Upper lobe of right lung (tissue), 1 donor: ENCODE measurements at regions of chr1 and their contacts with region 1.

Region 1: DNA sequence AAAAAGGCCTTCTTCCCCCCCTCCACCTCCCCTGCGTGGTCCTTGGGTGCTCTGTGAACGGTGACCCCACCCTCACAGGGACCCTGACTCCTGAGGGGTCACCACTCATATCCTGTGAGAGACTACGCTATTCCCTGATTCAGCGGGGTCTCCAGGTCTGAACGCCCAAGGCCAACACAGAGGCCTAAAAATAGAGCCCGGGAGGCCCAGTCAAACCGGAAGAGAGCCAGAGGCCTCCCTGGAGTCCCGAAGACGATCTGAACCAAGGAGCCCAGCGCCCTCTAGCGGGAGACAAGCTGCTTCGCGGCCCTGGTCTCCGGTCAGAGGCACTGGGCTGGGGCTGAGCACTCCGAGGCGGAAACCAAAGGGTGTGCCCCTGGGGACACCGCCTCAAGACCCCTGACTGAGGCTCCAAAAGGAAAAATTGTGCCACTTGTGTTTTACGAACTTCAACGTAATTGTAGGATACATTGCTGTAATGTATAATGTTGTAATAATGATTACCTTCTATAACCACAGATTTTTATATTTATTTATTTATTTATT is 42.4 kb upstream of the PSEN2 start:
- DNase-seq: peak; percentile 96
- ATAC-seq: peak; percentile 99
- H3K4me3 ChIP-seq: no peak overlapping the region
- H3K27ac ChIP-seq: peak overlapping the region; percentile 72
- H3K4me1 ChIP-seq: peaks cover 12% of the 10 kb centered on the region
- H3K27me3 ChIP-seq: no peaks in the 10 kb centered on the region
- CTCF ChIP-seq: peak; percentile 97

Region 2: GRCh38 chr1:226236826-226237225 is 591.2 kb before region 1 on chr1:
- intact Hi-C with region 1: no loop called
- DNase-seq: no peak
- ATAC-seq: no peak
- H3K4me3 ChIP-seq: no peak overlapping the region
- H3K27ac ChIP-seq: no peak overlapping the region
- H3K4me1 ChIP-seq: no peaks in the 10 kb centered on the region
- H3K27me3 ChIP-seq: no peaks in the 10 kb centered on the region
- CTCF ChIP-seq: no peak

Region 3: DNA sequence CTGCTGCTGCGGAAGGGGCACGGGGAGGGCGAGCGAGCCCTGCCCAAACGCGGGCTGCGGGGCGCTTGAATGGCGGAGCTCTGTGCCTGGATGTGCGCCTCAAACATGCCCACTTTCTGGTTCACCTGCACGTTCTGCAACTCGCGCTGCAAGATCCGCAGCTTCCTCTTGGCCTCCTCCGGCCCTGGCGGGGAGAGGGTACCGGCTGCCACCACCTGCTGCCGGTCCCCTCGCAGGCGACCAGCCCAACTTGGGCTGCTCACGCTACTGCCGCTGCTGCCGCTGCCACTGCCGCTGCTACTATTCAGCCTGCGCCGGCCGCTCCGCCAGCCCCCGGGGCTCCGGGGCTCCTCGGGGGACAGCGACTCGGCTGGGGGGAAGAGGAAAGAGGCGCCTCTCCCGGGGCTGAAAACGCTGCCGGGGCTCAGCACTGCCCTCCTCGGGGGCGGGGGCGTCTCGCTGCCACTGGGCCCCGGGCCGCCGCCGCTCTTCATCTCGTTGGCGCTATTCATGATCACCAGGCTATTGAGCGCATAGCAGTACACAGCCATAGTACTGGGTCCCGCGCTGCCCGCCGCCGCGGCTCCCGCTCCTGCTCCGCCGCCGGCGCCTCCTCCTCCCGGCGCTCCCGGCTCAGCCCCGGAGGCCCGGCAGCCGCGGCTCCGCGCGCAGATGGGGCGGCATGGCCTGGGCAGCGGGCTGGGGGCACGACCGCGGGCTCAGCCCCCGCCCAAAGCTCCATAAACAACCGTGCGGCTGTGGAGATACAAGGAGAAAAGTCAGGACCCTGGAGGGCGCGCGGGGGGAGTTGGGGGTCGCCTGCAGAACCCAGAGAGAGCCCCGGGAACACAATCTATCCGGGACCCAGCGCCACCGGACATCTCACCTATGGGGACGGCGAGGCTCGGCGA is 90.9 kb before region 1 on chr1:
- intact Hi-C with region 1: loop called (anchors 10 kb)
- DNase-seq: peak; percentile 74
- ATAC-seq: peak; percentile 57
- H3K4me3 ChIP-seq: peak overlapping the region; percentile 96
- H3K27ac ChIP-seq: peak overlapping the region; percentile 86
- H3K4me1 ChIP-seq: peaks cover 43% of the 10 kb centered on the region
- H3K27me3 ChIP-seq: no peaks in the 10 kb centered on the region
- CTCF ChIP-seq: peak; percentile 19

Region 4: DNA sequence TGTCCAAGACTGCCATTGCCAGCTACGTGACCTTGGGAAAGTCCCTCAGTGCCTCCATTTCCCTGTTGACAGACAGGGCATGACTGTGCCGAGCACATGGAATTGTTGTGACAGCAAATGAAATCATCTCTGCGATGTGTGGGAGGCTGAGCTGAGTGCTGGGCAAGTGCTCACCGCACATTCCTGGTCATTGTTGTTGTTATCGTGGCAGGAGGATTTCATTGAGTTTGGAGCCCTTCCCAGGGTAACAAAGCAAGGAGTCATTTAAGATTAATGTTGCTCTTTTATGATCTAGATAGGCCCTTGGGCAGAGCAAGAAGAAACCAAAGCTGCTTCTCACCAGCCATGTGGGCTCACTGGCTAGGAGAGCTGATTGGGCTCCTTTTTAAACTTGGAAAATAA is 49.4 kb before region 1 on chr1:
- intact Hi-C with region 1: no loop called
- DNase-seq: no peak
- ATAC-seq: peak; percentile 69
- H3K4me3 ChIP-seq: no peak overlapping the region
- H3K27ac ChIP-seq: peak overlapping the region; percentile 24
- H3K4me1 ChIP-seq: peaks cover 10% of the 10 kb centered on the region
- H3K27me3 ChIP-seq: no peaks in the 10 kb centered on the region
- CTCF ChIP-seq: no peak

Region 5: GRCh38 chr1:226912587-226913176 is 84.6 kb after region 1 on chr1:
- intact Hi-C with region 1: no loop called
- DNase-seq: peak; percentile 83
- ATAC-seq: peak; percentile 94
- H3K4me3 ChIP-seq: no peak overlapping the region
- H3K27ac ChIP-seq: no peak overlapping the region
- H3K4me1 ChIP-seq: no peaks in the 10 kb centered on the region
- H3K27me3 ChIP-seq: no peaks in the 10 kb centered on the region
- CTCF ChIP-seq: peak; percentile 60